ENCODE measurements at regions of chr3 and their contacts with region 1.

Region 1: DNA sequence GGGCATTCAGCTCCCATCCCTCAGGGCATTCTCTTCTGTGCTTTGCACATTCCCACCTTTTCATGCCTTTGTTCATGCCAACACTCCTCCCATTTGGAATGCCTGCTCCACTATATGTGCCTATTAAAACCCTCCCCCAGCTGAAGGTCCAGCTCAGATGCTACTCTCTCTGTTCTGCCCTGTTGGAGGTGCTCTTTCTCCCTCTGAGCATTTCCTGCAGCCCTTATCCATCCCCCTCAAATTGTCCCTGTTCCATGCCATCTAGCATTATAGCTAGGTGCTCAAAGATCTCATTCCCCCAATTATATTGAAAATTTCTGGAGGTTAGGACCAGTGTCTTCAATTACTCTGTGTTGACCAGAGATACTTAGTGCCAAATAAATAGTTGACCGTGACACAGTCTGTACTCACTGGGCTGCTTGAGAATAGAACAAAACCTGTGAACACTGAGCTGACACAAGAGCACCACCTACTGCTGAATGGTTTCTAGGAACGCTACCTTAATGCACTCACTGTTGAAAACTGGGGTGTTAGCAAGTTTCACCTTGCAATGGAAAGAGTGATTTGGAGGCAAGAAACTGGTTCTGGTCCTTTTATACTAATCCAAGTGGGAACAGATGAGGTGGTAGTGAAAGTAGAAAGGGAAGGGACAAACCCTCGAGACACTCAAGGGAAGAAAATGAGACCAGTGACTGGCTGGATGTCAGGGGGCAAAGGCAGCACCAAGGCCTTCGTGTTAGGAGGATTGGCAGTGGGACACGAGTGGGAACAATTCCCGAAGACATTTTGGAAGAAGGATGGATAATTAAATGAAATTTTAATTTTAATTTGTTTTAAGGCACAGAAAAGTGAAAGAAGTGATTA is 289.8 kb upstream of the ROPN1 start:
- DNase-seq: peak; percentile 23
- ATAC-seq: peak; percentile 93
- H3K4me3 Mint-ChIP-seq: no peak overlapping the region
- H3K27ac Mint-ChIP-seq: no peak overlapping the region
- H3K4me1 Mint-ChIP-seq: peaks cover 8% of the 10 kb centered on the region
- H3K27me3 Mint-ChIP-seq: no peaks in the 10 kb centered on the region; the same call in 1 of the 2 replicates
- CTCF ChIP-seq: no peak

Region 2: DNA sequence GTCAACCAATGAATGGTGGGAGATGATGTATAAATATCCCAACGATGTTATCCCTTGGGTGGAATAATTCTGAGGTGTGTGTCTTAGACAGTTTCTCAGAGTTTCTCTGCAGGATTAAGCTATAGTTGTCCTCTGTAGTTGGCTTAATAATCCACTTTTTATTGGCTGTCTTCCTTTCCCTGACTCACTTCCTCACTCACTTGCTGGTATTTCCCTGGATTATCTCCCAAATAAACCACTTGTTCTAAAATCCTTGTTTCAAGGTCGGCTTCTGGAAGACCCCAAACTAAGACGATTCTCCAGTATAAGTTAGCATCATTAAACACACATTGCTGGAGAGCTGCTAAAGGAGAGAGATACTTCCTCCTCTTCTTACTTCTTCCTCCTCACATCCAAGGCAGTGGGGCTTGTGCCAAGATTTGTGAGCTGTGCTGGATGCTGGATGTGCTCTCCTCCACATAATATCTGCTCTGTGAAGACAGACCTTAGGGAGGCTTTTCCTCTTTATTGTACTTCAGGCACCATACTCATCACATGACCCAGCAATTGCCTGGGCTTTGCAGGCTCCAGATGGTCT is 267.2 kb before region 1 on chr3:
- CTCF ChIA-PET with region 1: interaction called, 25 read pairs
- POLR2A ChIA-PET with region 1: no interaction called
- DNase-seq: no peak
- ATAC-seq: no peak
- H3K4me3 Mint-ChIP-seq: no peak overlapping the region
- H3K27ac Mint-ChIP-seq: no peak overlapping the region
- H3K4me1 Mint-ChIP-seq: peaks cover 3% of the 10 kb centered on the region; the same call in 1 of the 2 replicates
- H3K27me3 Mint-ChIP-seq: peaks cover 5% of the 10 kb centered on the region; the same call in 1 of the 2 replicates
- CTCF ChIP-seq: no peak

Region 3: DNA sequence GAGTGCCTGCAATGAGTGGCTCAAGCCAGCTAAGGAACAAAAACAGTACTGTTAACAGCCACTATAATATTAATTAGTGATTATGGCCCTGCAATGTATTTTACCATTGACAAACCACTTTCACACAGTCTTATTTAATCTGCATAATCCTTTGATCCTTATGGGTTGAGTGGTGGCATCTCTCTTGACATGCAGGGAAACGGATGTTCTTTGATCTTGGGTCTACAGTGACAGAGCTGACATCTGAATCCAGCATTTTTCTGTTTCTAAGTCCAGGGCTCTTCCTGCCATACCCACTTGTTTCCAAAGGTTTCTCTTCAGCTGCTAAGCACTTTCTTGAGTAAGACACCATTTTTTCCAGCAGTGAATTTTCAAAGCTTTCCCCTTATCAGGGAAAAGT is 12.1 kb before region 1 on chr3:
- CTCF ChIA-PET with region 1: interaction called, 16 read pairs
- POLR2A ChIA-PET with region 1: no interaction called
- DNase-seq: no peak
- ATAC-seq: no peak
- H3K4me3 Mint-ChIP-seq: no peak overlapping the region
- H3K27ac Mint-ChIP-seq: no peak overlapping the region
- H3K4me1 Mint-ChIP-seq: no peaks in the 10 kb centered on the region
- H3K27me3 Mint-ChIP-seq: no peaks in the 10 kb centered on the region
- CTCF ChIP-seq: no peak

Region 4: DNA sequence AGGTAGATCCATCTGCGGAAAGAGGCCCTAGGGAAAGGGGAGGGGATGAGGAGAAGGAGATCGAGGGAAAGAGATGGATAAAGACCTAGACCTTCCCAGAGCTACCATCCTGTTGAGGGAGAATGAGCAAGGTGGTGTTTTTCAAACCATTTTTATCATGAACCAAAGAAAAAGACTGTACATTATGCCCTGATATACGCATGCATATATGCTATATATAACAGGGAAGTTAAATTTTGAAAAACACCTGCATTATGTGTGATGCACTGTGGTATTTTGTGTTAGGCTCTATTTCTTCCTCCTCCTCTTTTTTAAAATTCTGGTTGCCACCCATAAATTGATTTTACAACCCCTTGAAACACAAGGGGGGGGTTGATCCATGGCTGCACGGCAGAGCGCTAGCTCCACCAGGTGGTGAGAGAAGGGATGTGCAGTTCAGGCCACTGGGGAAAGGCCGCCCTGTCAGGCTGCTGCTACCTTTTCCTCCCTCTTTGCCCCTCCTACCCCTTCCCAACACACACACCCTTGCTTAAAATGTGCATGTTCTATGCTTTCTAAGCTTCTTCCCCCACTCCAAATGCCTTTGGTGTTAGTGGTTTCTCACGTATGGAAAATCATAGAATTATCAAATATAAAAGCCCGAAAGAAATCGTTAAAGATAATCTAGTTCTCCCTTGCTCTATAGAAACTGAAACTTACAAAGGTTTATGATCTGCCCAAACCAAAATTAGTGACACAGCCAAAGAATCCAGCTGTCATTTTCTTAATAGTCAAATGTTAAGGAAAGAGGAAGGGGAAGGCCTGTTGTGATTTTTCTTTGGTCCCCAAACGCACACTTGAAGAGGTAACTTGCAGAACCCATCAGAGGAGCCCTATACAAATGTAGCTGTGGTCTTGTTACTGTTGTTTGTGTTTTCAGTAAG is 186.6 kb after region 1 on chr3:
- CTCF ChIA-PET with region 1: interaction called, 11 read pairs
- POLR2A ChIA-PET with region 1: no interaction called
- DNase-seq: peak; percentile 75
- ATAC-seq: peak; percentile 99
- H3K4me3 Mint-ChIP-seq: no peak overlapping the region
- H3K27ac Mint-ChIP-seq: no peak overlapping the region
- H3K4me1 Mint-ChIP-seq: peaks cover 6% of the 10 kb centered on the region
- H3K27me3 Mint-ChIP-seq: no peaks in the 10 kb centered on the region
- CTCF ChIP-seq: peak; percentile 95

Measured in WTC11 (cell line).